ENCODE measurements at regions of chr11 and their contacts with region 1.

Region 1: GRCh38 chr11:127738771-127739286 is 738.3 kb upstream of the KIRREL3 start:
- DNase-seq: no peak
- H3K4me3 ChIP-seq: no peak overlapping the region
- H3K27ac ChIP-seq: no peak overlapping the region
- H3K4me1 ChIP-seq: no peaks in the 10 kb centered on the region
- H3K27me3 ChIP-seq: no peaks in the 10 kb centered on the region
- CTCF ChIP-seq: no peak

Region 2: GRCh38 chr11:127804747-127805400 is 66.0 kb after region 1 on chr11:
- CTCF ChIA-PET with region 1: no interaction called
- dilution Hi-C with region 1: loop called (anchors 5 kb)
- in situ Hi-C with region 1: no loop called
- intact Hi-C with region 1: no loop called
- DNase-seq: no peak
- H3K4me3 ChIP-seq: no peak overlapping the region
- H3K27ac ChIP-seq: no peak overlapping the region
- H3K4me1 ChIP-seq: no peaks in the 10 kb centered on the region
- H3K27me3 ChIP-seq: no peaks in the 10 kb centered on the region
- CTCF ChIP-seq: no peak